CD4-positive, alpha-beta memory T cell (primary cell): ENCODE measurements at regions of chr1 and their contacts with region 1.

Region 1: GRCh38 chr1:208093754-208094719 is 150.1 kb downstream of the PLXNA2 start:
- DNase-seq: peak; percentile 31 to 46 (median 32)
- H3K4me3 ChIP-seq: no peak overlapping the region
- H3K4me3 Mint-ChIP-seq: no peak overlapping the region
- H3K27ac ChIP-seq: no peak overlapping the region
- H3K27ac Mint-ChIP-seq: peak overlapping the region in 1 of 7 donors; percentile 21
- H3K4me1 ChIP-seq: no peaks in the 10 kb centered on the region
- H3K4me1 Mint-ChIP-seq: no peaks in the 10 kb centered on the region
- H3K27me3 ChIP-seq: no peaks in the 10 kb centered on the region
- H3K27me3 Mint-ChIP-seq: no peaks in the 10 kb centered on the region

Region 2: DNA sequence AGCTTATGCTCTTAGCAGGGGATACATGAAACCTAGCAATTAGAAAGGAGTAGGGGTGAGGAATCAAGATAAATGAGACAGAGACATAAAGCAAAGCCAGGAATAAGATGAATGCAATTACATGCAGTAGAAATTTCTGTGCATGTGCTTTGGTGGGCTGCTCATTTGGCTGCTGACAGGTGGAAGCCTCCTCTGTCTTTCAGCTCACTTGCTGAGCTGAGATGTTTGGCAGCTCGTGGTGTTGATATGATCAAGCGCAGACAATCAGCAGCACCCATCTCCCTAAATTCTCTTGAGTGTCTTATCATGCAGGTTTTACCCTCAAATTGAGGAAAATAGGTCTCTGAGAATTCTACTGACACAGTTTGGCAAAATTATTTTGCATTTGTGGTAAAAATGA is 74.8 kb before region 1 on chr1:
- CTCF ChIA-PET with region 1: interaction called, 55 read pairs
- POLR2A ChIA-PET with region 1: no interaction called
- intact Hi-C with region 1: loop called (anchors 1 kb)
- DNase-seq: no peak
- H3K4me3 ChIP-seq: no peak overlapping the region
- H3K4me3 Mint-ChIP-seq: no peak overlapping the region
- H3K27ac ChIP-seq: no peak overlapping the region
- H3K27ac Mint-ChIP-seq: no peak overlapping the region
- H3K4me1 ChIP-seq: no peaks in the 10 kb centered on the region
- H3K4me1 Mint-ChIP-seq: no peaks in the 10 kb centered on the region
- H3K27me3 ChIP-seq: no peaks in the 10 kb centered on the region
- H3K27me3 Mint-ChIP-seq: peaks cover 7 to 10% of the 10 kb centered on the region in 2 donors

Region 3: DNA sequence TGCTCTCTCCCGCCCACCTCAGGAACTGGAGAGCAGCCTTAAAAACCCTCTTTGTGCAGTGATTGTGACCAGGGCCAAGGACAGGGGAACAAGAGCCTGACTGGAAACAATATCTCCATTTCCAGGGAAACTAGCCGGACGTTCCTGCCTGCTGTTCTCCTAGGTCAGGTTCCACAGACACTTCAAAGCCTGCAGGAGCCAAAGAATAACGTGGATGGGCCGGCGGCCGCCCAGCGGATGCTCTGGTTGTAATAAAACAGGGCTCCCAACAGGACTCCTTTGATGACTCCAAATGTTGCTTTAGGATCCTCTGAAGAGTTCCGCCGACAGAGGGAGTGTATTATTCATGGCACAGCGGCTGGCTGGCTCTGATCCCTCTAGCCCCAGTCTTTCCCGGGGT is 12.1 kb before region 1 on chr1:
- CTCF ChIA-PET with region 1: interaction called, 16 read pairs
- POLR2A ChIA-PET with region 1: interaction called, 3 read pairs
- intact Hi-C with region 1: no loop called
- DNase-seq: no peak
- H3K4me3 ChIP-seq: no peak overlapping the region
- H3K4me3 Mint-ChIP-seq: no peak overlapping the region
- H3K27ac ChIP-seq: no peak overlapping the region
- H3K27ac Mint-ChIP-seq: no peak overlapping the region
- H3K4me1 ChIP-seq: peaks cover 11% of the 10 kb centered on the region
- H3K4me1 Mint-ChIP-seq: peaks cover 10 to 15% (median 14%) of the 10 kb centered on the region in 4 donors
- H3K27me3 ChIP-seq: no peaks in the 10 kb centered on the region
- H3K27me3 Mint-ChIP-seq: no peaks in the 10 kb centered on the region

Region 4: GRCh38 chr1:208291923-208292711 is 198.1 kb after region 1 on chr1:
- CTCF ChIA-PET with region 1: no interaction called
- POLR2A ChIA-PET with region 1: no interaction called
- intact Hi-C with region 1: no loop called
- DNase-seq: no peak
- H3K4me3 ChIP-seq: no peak overlapping the region
- H3K4me3 Mint-ChIP-seq: no peak overlapping the region
- H3K27ac ChIP-seq: no peak overlapping the region
- H3K27ac Mint-ChIP-seq: no peak overlapping the region
- H3K4me1 ChIP-seq: no peaks in the 10 kb centered on the region
- H3K4me1 Mint-ChIP-seq: no peaks in the 10 kb centered on the region
- H3K27me3 ChIP-seq: no peaks in the 10 kb centered on the region
- H3K27me3 Mint-ChIP-seq: peaks cover 19 to 25% of the 10 kb centered on the region in 2 donors